Heart left ventricle (tissue), 16 donors: ENCODE measurements at regions of chr4 and their contacts with region 1.

Region 1: DNA sequence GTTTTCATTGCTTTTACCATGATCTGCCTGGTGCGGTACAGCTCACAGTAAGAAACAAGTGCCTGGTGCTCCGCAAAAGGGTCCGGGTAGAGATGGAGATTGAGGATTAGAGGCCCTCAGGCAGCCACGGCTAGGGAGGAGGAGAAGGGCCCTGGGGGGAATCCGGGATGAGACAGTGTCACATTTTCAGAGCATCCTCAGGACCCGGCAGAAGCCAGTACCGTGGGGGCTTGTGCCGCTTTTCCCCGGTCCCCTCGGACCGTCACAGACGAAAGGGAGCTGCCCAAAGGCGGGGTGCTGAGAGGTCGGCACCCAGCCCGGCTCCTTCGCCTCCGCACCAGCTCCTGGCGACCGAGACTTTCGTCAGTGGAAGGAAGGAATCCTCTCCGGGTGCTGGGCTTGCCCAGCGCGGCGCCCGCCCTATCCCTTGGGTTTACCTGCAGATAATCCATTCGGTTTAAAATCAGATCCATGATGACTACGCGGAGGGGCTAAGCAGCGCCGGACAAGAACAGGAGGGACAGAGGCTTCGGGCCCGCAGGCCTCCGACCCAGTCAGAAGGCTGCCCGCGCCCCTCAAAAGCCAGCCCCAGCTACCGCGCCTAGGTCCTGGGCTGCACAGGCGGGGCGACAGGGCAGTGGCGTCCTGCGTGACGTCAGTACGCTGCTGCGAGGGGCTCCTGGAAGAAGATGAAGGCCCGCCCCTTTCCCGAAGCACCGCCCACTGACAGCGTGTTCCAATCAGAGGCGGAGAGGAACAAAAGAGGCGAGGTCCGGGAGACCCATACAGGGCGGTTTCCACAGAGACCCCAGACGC is at the start of gene BBS7:
- DNase-seq: peak; percentile 97 to 99 (median 98)
- ATAC-seq: peak; percentile 99 to 100 (median 100)
- H3K4me3 ChIP-seq: peak within 1 kb of the TSS; percentile 59 to 96 (median 84)
- H3K27ac ChIP-seq: peak within 1 kb of the TSS; percentile 26 to 93 (median 84)
- H3K4me1 ChIP-seq: peaks cover 0 to 11% (median 2%) of the 10 kb centered on the region in 12 donors
- H3K27me3 ChIP-seq: peaks cover 0 to 4% (median 0%) of the 10 kb centered on the region in 9 donors
- CTCF ChIP-seq: no peak
- POLR2A ChIP-seq: peak in 1 of 2 donors; percentile 83
- total RNA-seq, gene BBS7: 3.3 to 7.8 (median 4.9) TPM

Region 2: GRCh38 chr4:121307445-121308327 is 562.4 kb before region 1 on chr4:
- intact Hi-C with region 1: no loop called
- DNase-seq: no peak
- ATAC-seq: no peak
- H3K4me3 ChIP-seq: no peak overlapping the region
- H3K27ac ChIP-seq: no peak overlapping the region
- H3K4me1 ChIP-seq: no peaks in the 10 kb centered on the region
- H3K27me3 ChIP-seq: no peaks in the 10 kb centered on the region
- CTCF ChIP-seq: peak in 10 of 12 donors; percentile 7 to 64 (median 33)
- POLR2A ChIP-seq: no peak

Region 3: GRCh38 chr4:121823505-121824170 is 46.4 kb before region 1 on chr4 and contains the start of gene CCNA2:
- intact Hi-C with region 1: loop called in 2 of 10 experiments (anchors 2 kb)
- DNase-seq: peak; percentile 96 to 98 (median 97)
- ATAC-seq: peak; percentile 100
- H3K4me3 ChIP-seq: peak within 1 kb of the TSS; percentile 22 to 73 (median 64)
- H3K27ac ChIP-seq: peak within 1 kb of the TSS in 11 of 12 donors; percentile 63 to 87 (median 81)
- H3K4me1 ChIP-seq: peaks cover 0 to 25% (median 7%) of the 10 kb centered on the region in 12 donors
- H3K27me3 ChIP-seq: no peaks in the 10 kb centered on the region
- CTCF ChIP-seq: peak in 3 of 12 donors; percentile 5 to 23 (median 22)
- POLR2A ChIP-seq: peak in 1 of 2 donors; percentile 46
- total RNA-seq, gene CCNA2: 0.09 to 9.4 (median 0.49) TPM in 8 of 9 donors, not detected in the other

Region 4: GRCh38 chr4:122142686-122143085 is 272.6 kb after region 1 on chr4:
- intact Hi-C with region 1: no loop called
- DNase-seq: no peak
- ATAC-seq: no peak
- H3K4me3 ChIP-seq: no peak overlapping the region
- H3K27ac ChIP-seq: no peak overlapping the region
- H3K4me1 ChIP-seq: no peaks in the 10 kb centered on the region
- H3K27me3 ChIP-seq: peaks cover 0 to 8% (median 0%) of the 10 kb centered on the region in 9 donors
- CTCF ChIP-seq: no peak
- POLR2A ChIP-seq: no peak